Activated naive CD4-positive, alpha-beta T cell treated with anti-CD3 and anti-CD28 coated beads for 36 hours (primary cell): ENCODE measurements at regions of chr1 and their contacts with region 1.

Region 1: DNA sequence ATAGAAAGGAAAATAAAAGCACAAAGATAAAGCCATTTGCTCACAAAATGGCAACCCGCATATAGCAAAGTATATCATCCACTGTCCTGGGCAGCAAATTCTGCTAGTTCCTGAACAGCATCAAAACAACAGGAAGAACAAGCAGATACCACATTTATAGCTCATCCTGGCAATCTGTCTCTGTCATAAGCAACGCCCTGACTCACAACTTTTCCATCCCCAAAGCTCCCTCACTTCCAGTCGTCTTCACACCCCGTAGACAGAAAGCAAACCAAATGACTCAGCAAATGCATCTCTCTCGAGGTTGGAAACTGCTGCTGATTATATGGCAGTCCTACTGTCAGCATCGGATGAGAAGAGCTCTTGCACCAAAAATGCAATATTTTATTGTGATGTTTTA is 65.8 kb downstream of the AK5 start:
- DNase-seq: peak; percentile 69
- H3K4me3 Mint-ChIP-seq: no peak overlapping the region
- H3K27ac Mint-ChIP-seq: peak overlapping the region; percentile 1
- H3K4me1 Mint-ChIP-seq: peaks cover 18% of the 10 kb centered on the region
- H3K27me3 Mint-ChIP-seq: no peaks in the 10 kb centered on the region

Region 2: DNA sequence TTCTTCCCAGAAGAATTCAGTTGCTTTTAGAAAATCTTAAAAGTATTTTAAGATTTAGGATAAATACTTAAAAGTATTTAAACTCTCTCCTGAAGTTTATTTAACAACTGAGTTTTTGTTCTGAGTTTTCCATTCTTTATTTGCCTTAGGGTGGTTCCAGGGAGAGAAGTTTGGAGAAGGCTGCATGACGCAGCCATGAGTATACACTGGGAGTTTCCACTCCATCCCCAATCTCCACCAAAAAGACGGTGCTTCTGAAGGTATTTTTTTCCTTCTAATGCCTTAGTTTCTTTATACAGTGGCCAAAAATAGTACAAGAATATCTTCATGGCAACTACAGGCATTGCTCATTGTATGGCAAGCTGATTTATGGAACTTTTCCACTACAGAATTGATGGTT is 357.7 kb before region 1 on chr1:
- CTCF ChIA-PET with region 1: no interaction called
- intact Hi-C with region 1: no loop called
- DNase-seq: no peak
- H3K4me3 Mint-ChIP-seq: no peak overlapping the region
- H3K27ac Mint-ChIP-seq: no peak overlapping the region
- H3K4me1 Mint-ChIP-seq: no peaks in the 10 kb centered on the region
- H3K27me3 Mint-ChIP-seq: no peaks in the 10 kb centered on the region

Region 3: DNA sequence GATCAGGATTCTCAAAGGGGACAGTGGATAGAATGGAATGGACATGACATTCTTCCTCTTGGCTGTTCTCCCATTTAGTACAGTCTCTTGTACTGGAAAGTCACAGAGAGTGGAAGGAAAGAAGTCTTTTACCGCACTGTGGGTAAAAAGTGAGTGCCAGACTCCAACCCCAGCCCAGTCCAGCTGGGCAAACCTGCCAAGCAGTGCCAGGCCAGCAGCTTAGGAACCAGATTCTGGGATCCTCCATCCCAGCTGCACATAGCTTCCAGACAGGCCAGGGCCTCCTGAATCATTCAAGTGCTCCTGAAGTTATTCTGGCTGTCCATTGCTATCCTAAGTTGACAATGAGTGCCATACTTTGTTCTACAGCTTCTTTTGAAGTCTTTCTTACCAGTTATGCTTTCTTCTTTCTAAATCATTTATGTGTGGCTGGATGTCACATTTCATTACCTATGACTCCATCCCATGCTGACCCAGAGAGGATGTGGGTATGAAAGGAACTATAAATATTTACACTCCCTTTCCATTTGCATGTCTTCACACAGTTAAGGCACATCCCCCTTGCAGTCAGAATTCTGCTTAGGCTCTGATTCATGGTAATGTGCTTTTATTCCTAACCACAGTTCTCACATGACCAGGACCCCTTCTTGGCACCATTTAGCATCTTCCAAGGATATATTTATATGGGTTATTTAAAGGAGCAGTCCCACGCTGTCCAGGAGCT is 23.1 kb after region 1 on chr1:
- CTCF ChIA-PET with region 1: no interaction called
- intact Hi-C with region 1: no loop called
- DNase-seq: peak; percentile 12
- H3K4me3 Mint-ChIP-seq: no peak overlapping the region
- H3K27ac Mint-ChIP-seq: no peak overlapping the region
- H3K4me1 Mint-ChIP-seq: peaks cover 29% of the 10 kb centered on the region
- H3K27me3 Mint-ChIP-seq: no peaks in the 10 kb centered on the region

Region 4: DNA sequence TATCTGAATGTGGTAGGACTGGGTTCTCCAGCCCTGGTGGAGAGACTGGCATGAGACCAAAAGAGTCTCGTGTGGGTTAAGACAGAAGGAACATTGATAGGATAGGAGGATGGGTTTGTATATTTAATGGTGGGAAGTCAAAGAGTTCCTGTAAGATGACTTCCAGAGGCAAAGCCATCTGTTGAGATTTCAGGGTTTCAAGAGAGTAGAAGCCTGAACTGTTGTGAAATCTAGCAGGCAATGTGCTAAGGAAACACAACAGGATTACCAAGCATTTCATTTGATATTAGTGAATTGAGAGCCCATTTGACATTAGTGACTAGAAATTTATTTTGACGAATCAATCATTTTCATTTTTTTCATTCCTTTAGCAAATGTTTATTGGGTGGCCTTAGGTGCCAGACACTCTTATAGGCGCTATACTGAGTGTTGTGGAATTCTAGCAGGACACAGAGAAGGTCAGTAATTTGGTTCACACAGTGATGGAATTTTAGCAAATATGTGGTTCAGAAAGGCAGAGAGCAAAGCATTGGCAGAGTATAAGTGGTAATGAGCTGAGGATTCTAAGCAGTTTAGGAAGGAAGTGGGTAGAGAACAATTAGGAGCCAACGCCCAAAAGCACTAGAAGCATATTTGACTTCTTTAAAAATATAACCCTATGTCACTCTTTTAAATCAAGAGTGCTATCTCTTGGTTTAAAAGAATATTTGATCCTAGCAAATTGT is 83.5 kb after region 1 on chr1:
- CTCF ChIA-PET with region 1: no interaction called
- intact Hi-C with region 1: loop called (anchors 5 kb)
- DNase-seq: no peak
- H3K4me3 Mint-ChIP-seq: no peak overlapping the region
- H3K27ac Mint-ChIP-seq: no peak overlapping the region
- H3K4me1 Mint-ChIP-seq: peaks cover 28% of the 10 kb centered on the region
- H3K27me3 Mint-ChIP-seq: no peaks in the 10 kb centered on the region